Dorsolateral prefrontal cortex (tissue), 120 donors: ENCODE measurements at regions of chr6 and their contacts with region 1.

Region 1: DNA sequence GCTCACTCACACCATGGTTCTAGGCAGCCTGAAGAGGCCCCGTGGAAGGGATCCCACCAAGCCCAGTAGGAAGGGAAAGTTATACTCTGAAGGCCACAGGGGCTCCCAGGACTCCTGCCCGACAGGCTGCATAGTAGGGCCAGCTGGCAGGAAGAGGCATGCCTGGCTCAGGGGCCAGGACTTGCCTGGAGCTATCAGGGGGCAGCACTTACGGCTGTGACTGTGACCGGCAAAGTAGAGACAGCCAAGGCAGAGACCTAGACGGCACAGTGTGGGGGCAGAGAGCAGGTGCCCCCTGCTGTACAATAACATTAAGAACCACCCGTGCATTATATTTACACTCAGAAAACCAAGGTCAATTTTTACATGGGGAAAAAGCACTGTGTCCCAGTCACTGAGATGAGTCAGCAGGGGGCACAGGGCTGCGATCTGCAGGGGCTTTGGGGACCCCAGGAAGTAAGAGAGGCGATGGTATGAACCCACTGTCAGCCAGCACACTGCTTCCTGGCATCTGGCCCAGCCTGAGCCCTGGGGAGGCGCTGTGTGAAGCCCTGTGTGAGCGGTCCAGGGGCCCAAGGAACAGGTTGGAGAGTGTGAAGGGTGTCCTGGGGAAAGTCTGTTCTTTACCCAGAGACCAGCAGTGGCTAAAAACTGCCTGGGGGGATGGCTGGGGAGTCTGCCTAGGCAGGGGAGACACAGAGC is 9.9 kb downstream of the CCDC167 start:
- DNase-seq: peak in 3 of 10 donors; percentile 23 to 43 (median 33)
- H3K4me3 ChIP-seq: no peak overlapping the region
- H3K27ac ChIP-seq: peak overlapping the region in 1 of 59 donors; percentile 21
- H3K27me3 ChIP-seq: no peaks in the 10 kb centered on the region
- CTCF ChIP-seq: peak in 1 of 56 donors; percentile 10

Region 2: GRCh38 chr6:37353761-37354525 is 135.9 kb before region 1 on chr6 and contains the start of gene RNF8:
- intact Hi-C with region 1: loop called in 1 of 2 experiments (anchors 5 kb)
- DNase-seq: peak; percentile 80 to 93 (median 88)
- H3K4me3 ChIP-seq: peak within 1 kb of the TSS; percentile 59 to 94 (median 82)
- H3K27ac ChIP-seq: peak within 1 kb of the TSS in 45 of 59 donors; percentile 1 to 89 (median 64)
- H3K27me3 ChIP-seq: no peaks in the 10 kb centered on the region
- CTCF ChIP-seq: peak in 14 of 56 donors; percentile 3 to 38 (median 24)
- total RNA-seq, gene RNF8: 16.3 to 45.3 (median 30.9) TPM

Region 3: DNA sequence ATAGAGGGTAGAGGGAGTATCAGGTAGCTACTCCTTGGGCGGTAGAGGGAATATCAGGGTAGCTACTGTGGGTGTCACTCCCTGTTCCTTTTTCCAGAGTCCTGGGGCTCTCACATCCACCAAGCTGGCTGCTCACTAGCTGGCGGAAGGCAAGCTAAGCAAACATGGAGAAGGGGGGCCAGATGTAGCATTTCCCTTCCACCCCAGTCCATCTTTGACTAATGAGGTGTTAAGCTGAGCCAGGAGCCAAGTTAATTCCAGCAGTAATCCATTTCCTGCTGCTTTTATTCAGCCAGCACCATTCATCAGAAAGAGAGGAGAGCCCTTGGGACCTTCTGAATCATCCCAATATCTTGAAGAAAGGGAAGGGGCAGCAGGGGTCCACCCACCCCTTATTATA is 659.7 kb after region 1 on chr6:
- intact Hi-C with region 1: no loop called
- DNase-seq: no peak
- H3K4me3 ChIP-seq: no peak overlapping the region
- H3K27ac ChIP-seq: no peak overlapping the region
- H3K27me3 ChIP-seq: no peaks in the 10 kb centered on the region
- CTCF ChIP-seq: no peak